Motor neuron (in vitro differentiated cells): ENCODE measurements at regions of chr11 and their contacts with region 1.

Region 1: DNA sequence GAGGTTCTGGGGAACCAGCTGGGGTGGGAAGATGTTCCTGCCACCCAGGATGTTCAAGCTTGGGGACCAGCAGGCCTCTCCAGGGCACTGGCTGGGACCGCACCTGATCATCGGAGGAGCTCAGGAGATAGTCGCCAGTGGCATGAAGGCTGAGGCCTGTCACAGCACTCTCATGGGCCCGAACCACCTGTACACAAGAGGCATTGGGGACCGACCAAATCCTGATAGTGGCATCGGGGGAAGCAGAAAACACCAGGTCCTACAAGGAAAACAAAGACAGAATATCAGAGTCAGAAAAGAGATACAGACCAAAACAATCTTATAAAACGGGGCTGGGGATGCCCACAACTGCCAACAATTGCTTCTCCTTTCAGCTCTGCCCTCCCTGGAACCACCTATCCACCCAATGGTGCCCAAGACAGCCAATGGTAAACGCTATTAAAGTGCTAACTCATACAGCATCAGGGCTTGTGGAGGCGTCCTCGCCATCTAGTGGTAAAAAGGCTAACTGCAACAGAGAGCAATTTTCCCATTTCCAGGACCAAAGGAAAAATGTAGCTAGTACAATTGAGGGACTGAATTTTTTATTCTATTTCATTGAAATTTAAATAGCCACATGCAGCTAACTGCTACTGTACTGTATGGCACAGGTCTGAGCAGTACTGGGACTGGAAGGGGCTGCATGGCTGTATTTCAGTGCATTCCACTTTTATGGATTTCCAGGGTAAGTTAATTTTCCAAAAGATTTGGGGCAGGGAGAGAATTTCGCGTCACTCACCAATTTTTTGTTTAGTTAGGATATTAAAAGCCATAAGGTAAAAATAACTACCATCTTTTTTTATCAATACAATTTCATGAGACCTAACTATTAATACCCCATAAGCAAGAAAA is 7.1 kb downstream of the PRPF19 start:
- ATAC-seq: peak; percentile 56 to 93 (median 74)
- H3K4me3 ChIP-seq: no peak overlapping the region
- H3K27ac ChIP-seq: no peak overlapping the region
- H3K4me1 ChIP-seq: peaks cover 1% of the 10 kb centered on the region in 2 donors

Region 2: GRCh38 chr11:60831143-60831500 is 68.2 kb before region 1 on chr11:
- in situ Hi-C with region 1: loop called in 1 of 9 experiments (anchors 10 kb)
- ATAC-seq: peak; percentile 75 to 98 (median 93)
- H3K4me3 ChIP-seq: peak overlapping the region in 2 of 5 donors; percentile 12 to 16
- H3K27ac ChIP-seq: no peak overlapping the region
- H3K4me1 ChIP-seq: no peaks in the 10 kb centered on the region